Vagina (tissue), 2 donors: ENCODE measurements at regions of chr19 and their contacts with region 1.

Region 1: DNA sequence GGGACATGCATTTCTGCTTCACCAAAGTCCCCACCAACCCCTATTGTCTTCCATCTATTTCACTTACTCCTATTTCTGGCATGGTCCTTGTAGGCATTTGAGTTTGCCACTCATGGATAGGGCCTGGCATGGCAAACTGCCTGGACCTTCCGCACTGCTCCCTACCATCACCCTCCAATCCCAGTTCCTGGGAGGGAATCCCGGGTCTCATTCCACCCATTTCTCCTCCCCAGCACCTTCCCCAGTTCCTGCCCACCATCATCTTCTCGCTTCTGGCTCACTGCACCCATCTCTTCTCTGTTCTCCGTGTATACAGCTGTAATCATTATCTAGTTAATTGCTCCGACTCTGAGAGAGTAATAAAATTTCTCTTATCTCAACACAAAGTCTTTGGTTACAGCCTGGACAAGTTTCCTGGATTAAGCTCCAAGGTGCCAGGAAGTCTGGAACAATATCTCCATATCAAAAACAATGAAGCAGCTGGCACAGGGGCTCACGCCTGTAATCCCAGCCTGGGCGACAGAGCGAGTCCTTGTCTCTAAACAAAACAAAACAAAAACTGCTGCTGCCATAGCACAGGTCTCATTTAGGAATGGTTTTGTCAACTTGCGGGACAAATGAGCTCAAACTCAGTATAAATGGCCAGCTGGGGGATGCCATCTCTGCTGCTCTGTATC is 17.0 kb upstream of the COX7A1 start:
- DNase-seq: no peak
- H3K4me3 ChIP-seq: no peak overlapping the region
- H3K27ac ChIP-seq: no peak overlapping the region
- H3K4me1 ChIP-seq: peaks cover 4% of the 10 kb centered on the region
- H3K27me3 ChIP-seq: no peaks in the 10 kb centered on the region
- CTCF ChIP-seq: no peak
- POLR2A ChIP-seq: no peak

Region 2: GRCh38 chr19:36081385-36081784 is 87.8 kb before region 1 on chr19:
- intact Hi-C with region 1: no loop called
- DNase-seq: no peak
- H3K4me3 ChIP-seq: no peak overlapping the region
- H3K27ac ChIP-seq: no peak overlapping the region
- H3K4me1 ChIP-seq: no peaks in the 10 kb centered on the region
- H3K27me3 ChIP-seq: no peaks in the 10 kb centered on the region
- CTCF ChIP-seq: no peak
- POLR2A ChIP-seq: no peak

Region 3: GRCh38 chr19:36128392-36128736 is 40.9 kb before region 1 on chr19:
- intact Hi-C with region 1: loop called (anchors 5 kb)
- DNase-seq: no peak
- H3K4me3 ChIP-seq: peak overlapping the region; percentile 45 to 49
- H3K27ac ChIP-seq: peak overlapping the region; percentile 88
- H3K4me1 ChIP-seq: peaks cover 18% of the 10 kb centered on the region
- H3K27me3 ChIP-seq: no peaks in the 10 kb centered on the region
- CTCF ChIP-seq: no peak
- POLR2A ChIP-seq: no peak